Psoas muscle (tissue), 8 donors: ENCODE measurements at regions of chr11 and their contacts with region 1.

Region 1: DNA sequence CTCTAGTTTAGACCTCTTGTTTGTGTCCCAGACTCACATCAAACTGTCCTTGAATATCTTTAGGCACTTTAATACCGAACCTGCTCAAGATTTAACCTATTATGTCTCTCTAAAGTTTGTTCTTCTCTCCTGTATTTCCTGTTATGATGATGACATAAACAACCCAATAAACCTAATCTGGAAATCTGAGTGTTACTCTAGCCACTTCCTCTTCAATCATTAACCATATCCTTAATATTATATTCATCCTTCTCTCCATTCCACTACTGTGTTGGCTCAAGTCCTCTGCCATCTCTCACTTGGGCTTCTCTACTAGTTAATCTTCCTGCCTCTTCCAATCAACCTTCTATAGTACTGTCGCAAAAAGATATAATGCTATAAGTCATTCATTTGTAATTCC is 36.0 kb downstream of the COPB1 start:
- DNase-seq: no peak
- ATAC-seq: no peak
- H3K4me3 ChIP-seq: no peak overlapping the region
- H3K27ac ChIP-seq: no peak overlapping the region
- H3K4me1 ChIP-seq: no peaks in the 10 kb centered on the region
- H3K27me3 ChIP-seq: no peaks in the 10 kb centered on the region
- CTCF ChIP-seq: no peak

Region 2: DNA sequence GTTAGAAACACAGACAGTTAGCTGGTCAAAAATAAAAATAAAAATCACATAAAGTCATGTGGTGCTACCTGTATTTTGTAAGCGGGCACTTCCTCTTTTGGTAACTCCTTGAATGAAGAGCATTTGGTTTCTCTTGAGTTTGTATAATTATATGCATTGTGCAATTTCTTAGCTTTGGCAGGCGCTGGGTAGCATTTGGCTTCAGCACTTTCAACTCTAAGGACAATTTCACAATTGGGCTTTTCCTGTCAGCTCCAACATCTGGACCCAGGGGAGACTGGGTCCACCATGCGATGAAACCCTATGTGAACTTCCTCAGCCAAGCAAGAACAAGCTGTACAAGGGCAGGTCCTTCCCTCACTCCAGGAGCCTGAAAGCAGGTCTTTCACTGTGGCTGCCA is 273.7 kb before region 1 on chr11:
- intact Hi-C with region 1: no loop called
- DNase-seq: peak; percentile 52 to 69
- ATAC-seq: peak in 3 of 4 donors; percentile 63 to 78 (median 74)
- H3K4me3 ChIP-seq: no peak overlapping the region
- H3K27ac ChIP-seq: no peak overlapping the region
- H3K4me1 ChIP-seq: no peaks in the 10 kb centered on the region
- H3K27me3 ChIP-seq: peaks cover 0 to 4% (median 0%) of the 10 kb centered on the region in 3 donors
- CTCF ChIP-seq: no peak

Region 3: DNA sequence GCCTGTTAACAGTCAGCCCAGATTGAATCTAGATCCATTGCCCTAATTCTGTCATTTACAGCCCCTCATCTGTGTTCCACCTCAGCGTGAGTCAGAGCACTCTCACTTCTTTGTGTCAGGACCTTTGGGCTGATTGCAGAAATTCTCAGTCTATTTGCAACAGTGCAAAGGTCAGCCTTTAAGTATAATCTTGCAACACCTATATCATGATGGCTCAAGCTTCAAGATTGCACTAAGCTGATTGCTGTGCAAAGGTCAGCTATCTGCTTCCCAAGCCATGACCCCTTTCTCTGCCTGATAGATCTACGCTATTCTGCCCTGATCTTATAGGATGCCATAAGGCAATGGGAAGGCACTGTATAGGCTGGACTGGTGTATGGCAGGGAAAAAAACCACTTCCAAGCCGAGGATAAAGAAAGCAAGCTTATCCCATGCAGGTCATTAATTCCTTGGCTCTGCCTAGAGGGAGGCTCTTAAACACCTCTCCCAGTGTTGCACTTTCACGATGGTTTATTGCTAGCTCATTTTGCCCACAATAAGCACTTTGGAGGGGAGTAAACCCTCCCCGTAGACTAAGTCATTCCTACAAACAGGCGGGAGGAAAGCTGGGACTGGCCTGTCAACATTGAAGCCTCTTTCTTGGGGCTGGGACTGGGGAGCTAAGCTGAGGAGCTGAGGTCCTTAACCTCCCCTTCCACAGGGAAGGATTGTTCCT is 205.2 kb before region 1 on chr11:
- intact Hi-C with region 1: no loop called
- DNase-seq: no peak
- ATAC-seq: no peak
- H3K4me3 ChIP-seq: no peak overlapping the region
- H3K27ac ChIP-seq: no peak overlapping the region
- H3K4me1 ChIP-seq: no peaks in the 10 kb centered on the region
- H3K27me3 ChIP-seq: peaks cover 0 to 23% (median 5%) of the 10 kb centered on the region in 3 donors
- CTCF ChIP-seq: no peak

Region 4: DNA sequence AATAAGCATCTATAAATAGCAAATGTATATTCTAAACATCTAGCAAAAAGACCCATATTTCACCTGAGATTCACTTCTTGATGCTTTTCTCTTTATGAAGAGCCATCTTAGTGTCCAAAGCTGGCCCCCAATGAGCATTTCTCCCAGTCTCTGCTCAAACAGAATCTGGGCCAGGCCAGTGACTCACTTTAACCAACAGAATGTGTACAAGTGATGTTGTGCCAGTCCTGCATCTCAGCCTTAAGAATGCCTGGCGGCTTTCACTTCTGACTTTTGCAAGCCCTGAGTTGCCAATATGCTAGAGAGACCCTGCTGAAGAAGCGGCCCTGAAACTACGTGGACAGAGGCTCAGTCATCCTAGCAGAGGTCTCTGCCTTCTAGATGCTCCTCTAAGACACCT is 42.9 kb after region 1 on chr11:
- intact Hi-C with region 1: loop called (anchors 5 kb)
- DNase-seq: no peak
- ATAC-seq: peak; percentile 28 to 78 (median 57)
- H3K4me3 ChIP-seq: no peak overlapping the region
- H3K27ac ChIP-seq: no peak overlapping the region
- H3K4me1 ChIP-seq: no peaks in the 10 kb centered on the region
- H3K27me3 ChIP-seq: no peaks in the 10 kb centered on the region
- CTCF ChIP-seq: no peak

Region 5: GRCh38 chr11:14513800-14514199 is 50.2 kb after region 1 on chr11:
- intact Hi-C with region 1: loop called (anchors 5 kb)
- DNase-seq: no peak
- ATAC-seq: no peak
- H3K4me3 ChIP-seq: no peak overlapping the region
- H3K27ac ChIP-seq: no peak overlapping the region
- H3K4me1 ChIP-seq: peaks cover 8% of the 10 kb centered on the region
- H3K27me3 ChIP-seq: no peaks in the 10 kb centered on the region
- CTCF ChIP-seq: no peak